A549 (cell line): ENCODE measurements at regions of chr15 and their contacts with region 1.

Region 1: GRCh38 chr15:72117486-72118399 is at the start of gene MYO9A:
- DNase-seq: peak; percentile 97 to 99
- ATAC-seq: peak; percentile 86 to 95
- H3K4me3 ChIP-seq: peak within 1 kb of the TSS; percentile 79
- H3K27ac ChIP-seq: peak within 1 kb of the TSS; percentile 90 to 94
- H3K4me1 ChIP-seq: peaks cover 32% of the 10 kb centered on the region
- CTCF ChIP-seq: no peak
- EP300 ChIP-seq: no peak
- POLR2A ChIP-seq: peak; percentile 64
- RAD21 ChIP-seq: no peak; a peak in 2 of 5 replicates
- polyA plus RNA-seq, gene MYO9A: 21.9 and 26.7 TPM in 2 replicates

Region 2: DNA sequence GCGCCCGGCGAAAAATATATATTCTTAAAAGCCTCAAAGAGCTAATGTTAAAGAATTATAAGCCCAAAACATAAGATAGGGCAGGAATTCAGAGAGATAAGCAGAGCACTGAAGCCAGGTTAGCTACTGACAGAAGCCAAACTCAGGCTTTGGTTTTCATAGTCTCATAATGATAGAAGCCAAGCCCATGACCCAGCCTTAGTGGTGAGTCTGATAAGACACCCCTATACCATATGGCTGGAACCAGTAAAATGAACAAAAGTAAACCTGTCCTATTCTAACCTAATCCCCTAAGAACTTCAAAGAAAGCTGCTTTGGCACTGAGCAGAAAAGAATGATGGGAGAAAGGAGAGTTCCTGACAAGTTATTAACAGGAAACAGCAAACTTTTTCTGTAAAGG is 25.7 kb before region 1 on chr15:
- CTCF ChIA-PET with region 1: no interaction called
- POLR2A ChIA-PET with region 1: interaction called, 12 read pairs
- DNase-seq: no peak
- ATAC-seq: no peak
- H3K4me3 ChIP-seq: no peak overlapping the region
- H3K27ac ChIP-seq: no peak overlapping the region
- H3K4me1 ChIP-seq: no peaks in the 10 kb centered on the region
- CTCF ChIP-seq: no peak
- EP300 ChIP-seq: no peak
- POLR2A ChIP-seq: no peak
- RAD21 ChIP-seq: no peak

Region 3: DNA sequence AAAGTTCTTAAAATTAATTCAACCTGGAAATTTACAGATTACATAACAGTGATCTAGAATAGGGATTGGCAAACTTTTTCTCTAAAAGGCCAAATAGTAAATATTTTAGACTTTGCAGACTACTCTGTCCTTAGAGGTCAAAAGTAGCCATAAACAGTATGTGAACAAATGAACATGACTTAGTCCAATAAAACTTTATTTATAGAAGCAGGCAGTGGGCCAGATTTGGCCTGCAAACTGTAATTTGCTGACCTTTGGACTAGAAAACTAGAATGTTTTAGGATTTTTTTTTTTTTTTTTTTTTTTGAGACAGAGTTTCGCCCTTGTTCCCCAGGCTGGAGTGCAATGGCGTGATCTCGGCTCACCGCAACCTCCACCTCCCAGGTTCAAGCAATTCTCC is 12.5 kb after region 1 on chr15:
- CTCF ChIA-PET with region 1: interaction called, 4 read pairs
- POLR2A ChIA-PET with region 1: interaction called, 12 read pairs
- DNase-seq: no peak
- ATAC-seq: no peak
- H3K4me3 ChIP-seq: no peak overlapping the region
- H3K27ac ChIP-seq: no peak overlapping the region
- H3K4me1 ChIP-seq: peaks cover 9% of the 10 kb centered on the region; the same call in 2 of the 3 replicates
- CTCF ChIP-seq: no peak
- EP300 ChIP-seq: no peak
- POLR2A ChIP-seq: no peak
- RAD21 ChIP-seq: no peak

Region 4: GRCh38 chr15:72179959-72180823 is 62.4 kb after region 1 on chr15:
- CTCF ChIA-PET with region 1: no interaction called
- POLR2A ChIA-PET with region 1: no interaction called
- DNase-seq: peak in 1 of 2 experiments; percentile 51
- ATAC-seq: peak in 1 of 2 experiments; percentile 6; a peak in 3 of 6 replicates
- H3K4me3 ChIP-seq: no peak overlapping the region
- H3K27ac ChIP-seq: peak overlapping the region in 1 of 2 experiments; percentile 16; a peak in 2 of 6 replicates
- H3K4me1 ChIP-seq: peaks cover 31% of the 10 kb centered on the region
- CTCF ChIP-seq: no peak
- EP300 ChIP-seq: no peak
- POLR2A ChIP-seq: no peak
- RAD21 ChIP-seq: no peak